ENCODE measurements at regions of chr20 and their contacts with region 1.

Region 1: GRCh38 chr20:63864847-63865640 is at the start of gene TPD52L2:
- DNase-seq: peak; percentile 99
- H3K4me3 Mint-ChIP-seq: peak within 1 kb of the TSS; percentile 98
- H3K27ac Mint-ChIP-seq: peak within 1 kb of the TSS; percentile 96
- H3K4me1 Mint-ChIP-seq: peaks cover 9% of the 10 kb centered on the region
- H3K27me3 Mint-ChIP-seq: no peaks in the 10 kb centered on the region
- CTCF ChIP-seq: no peak
- total RNA-seq, gene TPD52L2: 174 and 175 TPM in 2 replicates

Region 2: GRCh38 chr20:63627129-63627750 is 237.8 kb before region 1 on chr20:
- CTCF ChIA-PET with region 1: no interaction called
- POLR2A ChIA-PET with region 1: interaction called, 29 read pairs
- intact Hi-C with region 1: no loop called
- DNase-seq: peak; percentile 93
- H3K4me3 Mint-ChIP-seq: peak overlapping the region; percentile 79
- H3K27ac Mint-ChIP-seq: peak overlapping the region; percentile 88
- H3K4me1 Mint-ChIP-seq: peaks cover 7% of the 10 kb centered on the region
- H3K27me3 Mint-ChIP-seq: no peaks in the 10 kb centered on the region
- CTCF ChIP-seq: no peak

Region 3: DNA sequence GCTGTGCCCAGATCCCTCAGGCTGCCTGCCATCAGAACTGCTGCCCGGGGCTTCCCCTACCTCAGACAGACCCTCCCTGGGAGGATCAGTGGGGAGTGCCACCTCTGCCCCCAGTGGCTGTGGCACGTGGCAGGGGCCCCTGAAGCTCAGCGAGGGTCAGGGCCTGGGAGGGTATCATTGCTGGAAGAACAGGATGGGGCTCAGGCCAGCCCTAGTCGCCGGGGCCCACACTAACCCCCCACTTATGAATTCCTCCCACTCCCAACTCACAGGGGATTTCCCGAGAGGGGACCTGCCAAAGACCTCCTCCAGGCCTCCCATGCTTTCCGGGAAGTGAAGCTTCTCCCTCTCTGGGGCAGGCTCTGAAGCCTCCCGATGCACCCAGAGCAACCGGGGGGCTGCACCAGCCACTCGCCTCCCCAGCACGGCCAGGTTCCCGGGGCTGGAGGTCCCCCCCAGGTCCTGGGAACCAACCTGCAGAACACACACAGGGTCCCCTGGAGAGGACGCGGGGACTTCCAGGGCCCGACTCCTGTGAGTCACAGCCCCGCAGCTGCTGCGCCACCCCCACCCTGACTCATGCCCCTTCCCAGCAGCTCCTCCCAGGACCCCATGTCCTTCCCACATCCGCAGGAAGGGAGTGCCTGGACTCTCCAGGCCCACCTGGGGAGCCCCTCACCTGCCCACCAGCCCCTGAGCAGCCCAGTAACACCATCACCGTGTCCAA is 166.1 kb before region 1 on chr20:
- CTCF ChIA-PET with region 1: no interaction called
- POLR2A ChIA-PET with region 1: interaction called, 18 read pairs
- intact Hi-C with region 1: no loop called
- DNase-seq: peak; percentile 94
- H3K4me3 Mint-ChIP-seq: peak overlapping the region; percentile 72
- H3K27ac Mint-ChIP-seq: peak overlapping the region; percentile 75
- H3K4me1 Mint-ChIP-seq: peaks cover 17% of the 10 kb centered on the region
- H3K27me3 Mint-ChIP-seq: no peaks in the 10 kb centered on the region
- CTCF ChIP-seq: no peak

Region 4: DNA sequence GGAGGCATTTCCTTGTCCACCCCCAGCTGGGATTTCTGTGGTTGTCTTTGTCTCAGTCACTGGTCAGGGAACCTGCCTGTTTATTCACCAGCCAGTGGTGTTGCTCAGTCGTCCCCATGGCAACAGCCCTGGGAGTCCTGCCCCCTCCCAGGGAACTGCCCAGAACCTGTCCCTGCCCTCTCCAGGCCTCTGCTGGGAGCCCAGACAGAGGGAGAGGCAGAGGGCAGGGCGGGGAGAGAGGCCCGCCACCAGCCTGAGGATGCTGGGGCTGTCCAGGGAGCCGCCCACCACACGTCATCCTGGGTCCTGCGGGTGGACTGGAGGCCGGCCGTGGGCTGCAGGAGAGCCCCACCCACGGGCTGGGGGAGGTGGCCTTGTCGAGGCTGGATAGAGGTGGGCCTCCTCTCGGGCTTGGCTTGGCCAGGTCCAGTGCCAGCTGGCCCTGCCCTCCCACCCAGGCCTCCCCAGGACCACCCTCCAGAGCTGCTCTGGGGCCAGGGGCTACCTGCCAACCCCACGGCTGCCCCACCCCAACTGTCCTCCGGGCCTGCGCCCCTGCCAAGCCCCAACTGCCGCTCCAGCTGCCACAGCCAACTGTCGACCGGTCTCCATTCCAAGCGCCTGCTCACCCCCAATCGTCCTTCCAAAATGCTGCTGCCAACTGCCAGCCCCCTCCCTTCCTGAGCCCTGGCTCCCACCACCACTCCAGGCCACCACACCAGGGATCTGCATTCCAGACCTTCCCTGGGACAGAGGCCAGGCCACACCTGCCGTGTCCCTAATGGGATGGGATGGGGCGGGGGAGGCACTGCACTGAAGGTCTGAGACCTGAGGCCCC is 29.8 kb before region 1 on chr20:
- CTCF ChIA-PET with region 1: interaction called, 3 read pairs
- POLR2A ChIA-PET with region 1: interaction called, 13 read pairs
- intact Hi-C with region 1: no loop called
- DNase-seq: peak; percentile 97
- H3K4me3 Mint-ChIP-seq: peak overlapping the region; percentile 44
- H3K27ac Mint-ChIP-seq: no peak overlapping the region
- H3K4me1 Mint-ChIP-seq: peaks cover 5% of the 10 kb centered on the region
- H3K27me3 Mint-ChIP-seq: peaks cover 3% of the 10 kb centered on the region
- CTCF ChIP-seq: no peak

Region 5: GRCh38 chr20:63903796-63904561 is 38.9 kb after region 1 on chr20:
- CTCF ChIA-PET with region 1: interaction called, 4 read pairs
- POLR2A ChIA-PET with region 1: interaction called, 142 read pairs
- intact Hi-C with region 1: no loop called
- DNase-seq: no peak
- H3K4me3 Mint-ChIP-seq: no peak overlapping the region
- H3K27ac Mint-ChIP-seq: no peak overlapping the region
- H3K4me1 Mint-ChIP-seq: peaks cover 11% of the 10 kb centered on the region
- H3K27me3 Mint-ChIP-seq: no peaks in the 10 kb centered on the region
- CTCF ChIP-seq: no peak

Measured in MCF 10A (cell line).